ENCODE measurements at regions of chrX and their contacts with region 1.

Region 1: GRCh38 chrX:24371391-24371972 is 11.0 kb downstream of the SUPT20HL1 start:
- DNase-seq: no peak
- H3K4me3 ChIP-seq: no peak overlapping the region
- H3K27me3 ChIP-seq: no peaks in the 10 kb centered on the region
- CTCF ChIP-seq: peak; percentile 58

Region 2: DNA sequence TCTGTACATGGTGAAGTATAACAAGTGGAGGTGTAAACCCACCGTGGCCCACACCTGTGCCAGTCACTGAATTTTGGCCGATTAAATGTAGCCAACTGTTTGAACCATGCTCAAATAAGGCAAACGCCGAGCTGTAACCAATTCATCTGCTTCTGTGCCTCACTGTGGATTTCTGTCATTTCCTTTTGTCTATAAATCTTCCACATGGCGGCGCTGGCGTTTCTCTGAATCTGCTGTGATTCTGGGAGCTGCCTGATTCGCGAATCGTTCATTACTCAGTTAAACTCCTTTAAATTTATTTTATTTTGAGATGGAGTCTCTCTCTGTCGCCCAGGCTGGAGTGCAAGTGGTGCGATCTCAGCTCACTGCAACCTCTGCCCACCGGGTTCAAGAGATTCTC is 76.9 kb before region 1 on chrX:
- CTCF ChIA-PET with region 1: no interaction called
- POLR2A ChIA-PET with region 1: no interaction called
- DNase-seq: no peak
- H3K4me3 ChIP-seq: no peak overlapping the region
- H3K27me3 ChIP-seq: no peaks in the 10 kb centered on the region
- CTCF ChIP-seq: no peak

Region 3: GRCh38 chrX:24357106-24357505 is 14.4 kb before region 1 on chrX:
- CTCF ChIA-PET with region 1: interaction called, 11 read pairs
- POLR2A ChIA-PET with region 1: no interaction called
- DNase-seq: no peak
- H3K4me3 ChIP-seq: no peak overlapping the region
- H3K27me3 ChIP-seq: no peaks in the 10 kb centered on the region
- CTCF ChIP-seq: no peak